Dorsolateral prefrontal cortex (tissue), 120 donors: ENCODE measurements at regions of chr4 and their contacts with region 1.

Region 1: GRCh38 chr4:154399259-154399974 is 92.2 kb downstream of the DCHS2 start:
- DNase-seq: no peak
- H3K4me3 ChIP-seq: peak overlapping the region in 28 of 59 donors; percentile 1 to 56 (median 35)
- H3K27ac ChIP-seq: peak overlapping the region in 11 of 59 donors; percentile 4 to 67 (median 42)
- H3K27me3 ChIP-seq: peaks cover 0 to 5% (median 0%) of the 10 kb centered on the region in 45 donors
- CTCF ChIP-seq: peak in 55 of 56 donors; percentile 16 to 70 (median 46)

Region 2: DNA sequence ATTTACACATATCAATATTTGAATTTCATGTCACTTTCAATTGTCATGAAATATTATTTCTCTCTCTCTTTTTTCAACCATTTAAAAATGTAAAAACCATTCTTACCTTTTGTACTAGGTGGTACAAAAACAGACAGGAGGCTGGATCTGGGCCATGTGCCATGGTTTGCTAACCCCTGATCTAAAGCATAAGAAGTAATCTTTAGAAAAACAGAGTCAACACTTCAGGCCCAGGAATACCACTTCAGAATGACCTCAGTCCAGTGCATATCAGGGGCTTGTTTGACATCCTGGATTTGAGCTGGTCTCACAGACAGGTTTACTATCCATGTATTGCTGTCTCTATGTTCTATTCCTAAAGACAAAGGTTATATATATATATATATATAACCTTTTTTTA is 10.3 kb before region 1 on chr4:
- intact Hi-C with region 1: no loop called
- DNase-seq: no peak
- H3K4me3 ChIP-seq: no peak overlapping the region
- H3K27ac ChIP-seq: no peak overlapping the region
- H3K27me3 ChIP-seq: no peaks in the 10 kb centered on the region
- CTCF ChIP-seq: no peak

Region 3: GRCh38 chr4:154516318-154517029 is 117.1 kb after region 1 on chr4:
- intact Hi-C with region 1: loop called in 1 of 2 experiments (anchors 10 kb)
- DNase-seq: no peak
- H3K4me3 ChIP-seq: no peak overlapping the region
- H3K27ac ChIP-seq: peak overlapping the region in 43 of 59 donors; percentile 9 to 80 (median 48)
- H3K27me3 ChIP-seq: peaks cover 0 to 8% (median 0%) of the 10 kb centered on the region in 45 donors
- CTCF ChIP-seq: no peak

Region 4: GRCh38 chr4:154545689-154546088 is 146.3 kb after region 1 on chr4:
- intact Hi-C with region 1: no loop called
- DNase-seq: no peak
- H3K4me3 ChIP-seq: no peak overlapping the region
- H3K27ac ChIP-seq: no peak overlapping the region
- H3K27me3 ChIP-seq: no peaks in the 10 kb centered on the region
- CTCF ChIP-seq: no peak